Motor neuron (in vitro differentiated cells): ENCODE measurements at regions of chr14 and their contacts with region 1.

Region 1: GRCh38 chr14:23469127-23469905 is at the start of gene NGDN:
- ATAC-seq: peak; percentile 92 to 97 (median 95)
- H3K4me3 ChIP-seq: peak within 1 kb of the TSS; percentile 61 to 82 (median 76)
- H3K27ac ChIP-seq: peak within 1 kb of the TSS; percentile 76 to 87
- H3K4me1 ChIP-seq: peaks cover 6 to 7% of the 10 kb centered on the region in 2 donors
- total RNA-seq, gene NGDN: 38.1 to 67.6 (median 56.4) TPM

Region 2: DNA sequence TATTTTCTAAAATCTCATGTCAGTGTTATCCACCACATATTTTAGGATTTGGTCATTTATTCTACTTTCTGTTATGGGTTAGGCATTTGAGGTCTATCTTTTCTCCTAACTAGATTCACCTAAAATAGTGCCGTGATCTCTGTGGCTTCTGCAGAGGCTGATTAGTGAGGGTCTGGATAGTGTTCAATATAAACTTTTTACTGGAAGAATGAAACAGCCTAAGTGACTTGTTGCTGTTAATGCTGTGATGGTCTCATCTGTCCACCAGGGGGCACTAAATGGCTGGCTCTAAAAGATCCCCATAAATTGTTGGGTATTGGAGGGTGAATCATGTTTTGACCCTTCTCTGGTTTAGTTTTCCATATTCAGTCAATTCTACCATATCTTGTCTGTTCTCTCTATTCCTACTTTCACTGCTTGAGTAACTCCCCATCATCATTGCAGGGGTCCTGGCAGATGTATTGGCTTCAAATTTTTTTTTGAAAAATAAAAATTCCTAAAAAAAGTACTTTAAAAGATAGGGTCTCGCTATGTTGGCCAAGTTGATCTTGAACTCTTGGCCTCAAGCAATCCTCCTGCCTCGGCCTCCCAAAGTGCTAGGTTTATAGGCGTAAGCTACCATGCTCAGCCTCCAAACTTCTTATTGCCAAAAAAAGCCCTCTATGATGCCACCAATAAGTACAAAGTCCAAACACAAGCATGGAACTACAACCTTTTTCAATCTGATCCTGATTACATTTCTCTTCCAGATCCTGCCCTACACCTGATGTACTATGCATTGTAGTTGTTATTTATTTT is 141.2 kb before region 1 on chr14:
- in situ Hi-C with region 1: loop called in 3 of 9 experiments (anchors 10 to 25 kb)
- ATAC-seq: peak; percentile 54 to 83 (median 70)
- H3K4me3 ChIP-seq: no peak overlapping the region
- H3K27ac ChIP-seq: no peak overlapping the region
- H3K4me1 ChIP-seq: peaks cover 1 to 3% of the 10 kb centered on the region in 2 donors

Region 3: GRCh38 chr14:23335623-23336022 is 133.7 kb before region 1 on chr14:
- in situ Hi-C with region 1: loop called in 3 of 9 experiments (anchors 10 to 25 kb)
- ATAC-seq: no peak
- H3K4me3 ChIP-seq: no peak overlapping the region
- H3K27ac ChIP-seq: no peak overlapping the region
- H3K4me1 ChIP-seq: no peaks in the 10 kb centered on the region

Region 4: GRCh38 chr14:23567192-23568020 is 98.1 kb after region 1 on chr14 and contains the start of gene AP1G2:
- in situ Hi-C with region 1: loop called in 1 of 9 experiments (anchors 5 kb)
- ATAC-seq: peak; percentile 61 to 84 (median 73)
- H3K4me3 ChIP-seq: peak within 1 kb of the TSS; percentile 39 to 84 (median 56)
- H3K27ac ChIP-seq: peak within 1 kb of the TSS; percentile 69 to 75
- H3K4me1 ChIP-seq: peaks cover 32 to 35% of the 10 kb centered on the region in 2 donors
- total RNA-seq, gene AP1G2: 7.5 to 125 (median 25.5) TPM

Region 5: GRCh38 chr14:23751616-23752015 is 282.3 kb after region 1 on chr14:
- in situ Hi-C with region 1: no loop called
- ATAC-seq: peak in 1 of 8 experiments; percentile 45
- H3K4me3 ChIP-seq: no peak overlapping the region
- H3K27ac ChIP-seq: no peak overlapping the region
- H3K4me1 ChIP-seq: peaks cover 0 to 4% of the 10 kb centered on the region in 2 donors